Posterior vena cava (tissue), 2 donors: ENCODE measurements at regions of chr1 and their contacts with region 1.

Region 1: GRCh38 chr1:31084782-31085569 is 19.5 kb upstream of the PUM1 start:
- DNase-seq: peak; percentile 17

Region 2: GRCh38 chr1:31122101-31122735 is 37.2 kb after region 1 on chr1:
- intact Hi-C with region 1: no loop called
- DNase-seq: no peak

Region 3: DNA sequence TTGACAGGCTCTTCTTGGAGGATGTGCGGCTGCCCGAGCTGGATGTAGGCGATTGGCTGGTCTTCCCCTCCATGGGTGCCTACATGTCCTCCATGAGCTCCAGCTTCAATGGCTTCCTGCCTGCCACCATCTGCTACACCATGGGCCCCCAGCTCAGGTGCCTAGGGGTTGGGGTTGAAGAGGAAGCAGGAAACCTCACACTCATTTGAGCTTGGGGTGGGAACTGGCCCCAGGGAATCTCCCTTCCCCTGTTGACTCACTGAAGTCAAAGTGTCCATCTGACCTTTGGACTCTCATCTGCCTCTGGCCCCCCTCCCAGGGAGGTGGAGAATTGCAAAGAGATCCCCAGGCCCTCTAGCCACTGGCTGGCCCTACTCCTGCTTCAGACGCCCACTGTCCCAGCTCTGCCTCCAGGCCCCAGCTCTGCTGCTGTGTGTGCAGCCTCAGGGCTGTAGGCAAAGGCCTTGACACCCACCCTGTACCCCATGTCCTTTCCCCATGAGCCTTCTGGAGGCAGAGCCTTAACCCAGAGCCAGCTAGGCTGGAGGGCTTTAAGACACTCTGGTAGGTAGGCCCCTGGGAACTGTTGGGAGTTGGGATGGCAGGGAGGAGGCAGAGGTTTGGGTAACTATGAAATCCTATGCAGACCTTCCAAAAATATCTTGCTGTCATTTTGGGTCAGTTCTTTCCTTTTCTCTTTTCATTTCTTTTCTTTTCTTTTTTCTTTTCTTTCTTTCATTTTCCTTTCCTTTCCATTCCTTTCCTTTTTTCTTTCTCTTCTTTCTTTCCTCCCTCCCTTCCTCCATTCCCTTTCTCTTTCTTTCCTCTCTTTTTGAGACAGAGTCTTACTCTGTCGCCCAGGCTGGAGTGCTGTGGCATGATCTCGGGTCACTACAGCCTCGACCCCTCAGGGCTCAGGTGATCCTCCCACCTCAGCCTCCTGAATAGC is 424.4 kb after region 1 on chr1:
- intact Hi-C with region 1: loop called in 1 of 2 experiments (anchors 5 kb)
- DNase-seq: no peak